T-cell (primary cell): ENCODE measurements at regions of chr1 and their contacts with region 1.

Region 1: GRCh38 chr1:193909406-193910082 is 723.1 kb upstream of the B3GALT2 start:
- DNase-seq: no peak
- ATAC-seq: no peak
- H3K4me3 ChIP-seq: no peak overlapping the region
- H3K4me3 Mint-ChIP-seq: no peak overlapping the region
- H3K27ac ChIP-seq: no peak overlapping the region
- H3K27ac Mint-ChIP-seq: no peak overlapping the region
- H3K4me1 ChIP-seq: no peaks in the 10 kb centered on the region
- H3K4me1 Mint-ChIP-seq: no peaks in the 10 kb centered on the region
- H3K27me3 ChIP-seq: no peaks in the 10 kb centered on the region
- H3K27me3 Mint-ChIP-seq: no peaks in the 10 kb centered on the region

Region 2: GRCh38 chr1:193831465-193831864 is 78.1 kb before region 1 on chr1:
- CTCF ChIA-PET with region 1: no interaction called
- POLR2A ChIA-PET with region 1: interaction called in 1 of 2 experiments, 12 read pairs
- DNase-seq: no peak
- ATAC-seq: no peak
- H3K4me3 ChIP-seq: no peak overlapping the region
- H3K4me3 Mint-ChIP-seq: no peak overlapping the region
- H3K27ac ChIP-seq: no peak overlapping the region
- H3K27ac Mint-ChIP-seq: no peak overlapping the region
- H3K4me1 ChIP-seq: no peaks in the 10 kb centered on the region
- H3K4me1 Mint-ChIP-seq: peaks cover 0 to 2% (median 0%) of the 10 kb centered on the region in 3 donors
- H3K27me3 ChIP-seq: no peaks in the 10 kb centered on the region
- H3K27me3 Mint-ChIP-seq: no peaks in the 10 kb centered on the region

Region 3: GRCh38 chr1:193841857-193842256 is 67.7 kb before region 1 on chr1:
- CTCF ChIA-PET with region 1: no interaction called
- POLR2A ChIA-PET with region 1: no interaction called
- DNase-seq: no peak
- ATAC-seq: no peak
- H3K4me3 ChIP-seq: no peak overlapping the region
- H3K4me3 Mint-ChIP-seq: no peak overlapping the region
- H3K27ac ChIP-seq: no peak overlapping the region
- H3K27ac Mint-ChIP-seq: no peak overlapping the region
- H3K4me1 ChIP-seq: no peaks in the 10 kb centered on the region
- H3K4me1 Mint-ChIP-seq: peaks cover 0 to 3% (median 0%) of the 10 kb centered on the region in 3 donors
- H3K27me3 ChIP-seq: no peaks in the 10 kb centered on the region
- H3K27me3 Mint-ChIP-seq: no peaks in the 10 kb centered on the region

Region 4: GRCh38 chr1:193971595-193971994 is 62.1 kb after region 1 on chr1:
- CTCF ChIA-PET with region 1: no interaction called
- POLR2A ChIA-PET with region 1: interaction called in 1 of 2 experiments, 10 read pairs
- DNase-seq: no peak
- ATAC-seq: no peak
- H3K4me3 ChIP-seq: no peak overlapping the region
- H3K4me3 Mint-ChIP-seq: no peak overlapping the region
- H3K27ac ChIP-seq: no peak overlapping the region
- H3K27ac Mint-ChIP-seq: no peak overlapping the region
- H3K4me1 ChIP-seq: no peaks in the 10 kb centered on the region
- H3K4me1 Mint-ChIP-seq: peaks cover 0 to 10% (median 0%) of the 10 kb centered on the region in 3 donors
- H3K27me3 ChIP-seq: no peaks in the 10 kb centered on the region
- H3K27me3 Mint-ChIP-seq: no peaks in the 10 kb centered on the region